ENCODE measurements at regions of chr17 and their contacts with region 1.

Region 1: GRCh38 chr17:55710410-55710809 is 12.3 kb downstream of the TMEM100 start:
- DNase-seq: peak; percentile 51 to 60
- ATAC-seq: peak; percentile 88 to 91
- H3K4me3 ChIP-seq: peak overlapping the region in 1 of 4 donors; percentile 44
- H3K27ac ChIP-seq: peak overlapping the region; percentile 88 to 96 (median 94)
- H3K4me1 ChIP-seq: peaks cover 48 to 55% of the 10 kb centered on the region in 2 donors
- H3K27me3 ChIP-seq: no peaks in the 10 kb centered on the region
- CTCF ChIP-seq: no peak
- POLR2A ChIP-seq: no peak

Region 2: DNA sequence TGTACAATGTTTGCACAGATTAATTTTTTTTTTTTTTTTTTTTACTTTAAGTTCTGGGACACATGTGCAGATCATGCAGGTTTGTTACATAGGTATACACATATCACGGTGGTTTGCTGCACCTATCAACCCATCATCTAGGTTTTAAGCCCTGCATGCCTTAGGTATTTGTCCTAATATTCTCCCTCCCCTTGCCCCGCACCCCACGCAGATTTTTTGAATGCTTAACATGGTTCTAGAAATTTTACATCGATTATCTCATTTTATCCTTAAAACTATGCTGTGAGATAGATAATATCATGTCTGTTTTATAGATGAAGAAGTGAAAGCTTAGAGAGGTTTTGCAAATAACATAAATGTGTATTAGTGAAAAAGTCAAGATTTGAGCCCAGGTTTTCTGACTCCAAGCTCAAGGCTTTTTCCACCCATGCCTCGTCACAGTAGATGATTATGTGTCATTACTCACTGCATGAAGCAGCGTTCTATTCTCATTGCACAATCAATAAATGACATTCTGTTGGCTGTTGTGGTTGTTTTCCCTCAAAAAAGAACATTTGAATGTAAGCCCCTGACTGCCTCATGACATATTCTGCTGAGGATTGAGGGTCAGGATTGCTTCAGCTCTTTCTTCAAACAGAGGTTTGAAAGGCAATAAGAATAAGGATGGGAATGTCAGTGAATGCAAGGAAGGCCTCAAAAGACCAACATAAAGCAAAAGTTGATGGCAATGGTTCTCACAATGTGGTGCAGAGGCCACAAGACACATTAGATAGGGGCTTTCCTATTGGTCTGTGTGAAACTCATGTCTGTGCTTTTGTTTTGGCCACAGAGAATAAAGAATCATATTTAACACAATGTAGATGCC is 283.6 kb before region 1 on chr17:
- in situ Hi-C with region 1: no loop called
- intact Hi-C with region 1: no loop called
- DNase-seq: no peak
- ATAC-seq: no peak
- H3K4me3 ChIP-seq: no peak overlapping the region
- H3K27ac ChIP-seq: no peak overlapping the region
- H3K4me1 ChIP-seq: peaks cover 4 to 5% of the 10 kb centered on the region in 2 donors
- H3K27me3 ChIP-seq: no peaks in the 10 kb centered on the region
- CTCF ChIP-seq: no peak
- POLR2A ChIP-seq: no peak

Region 3: GRCh38 chr17:55625521-55625920 is 84.9 kb before region 1 on chr17:
- in situ Hi-C with region 1: no loop called
- intact Hi-C with region 1: no loop called
- DNase-seq: no peak
- ATAC-seq: no peak
- H3K4me3 ChIP-seq: no peak overlapping the region
- H3K27ac ChIP-seq: no peak overlapping the region
- H3K4me1 ChIP-seq: no peaks in the 10 kb centered on the region
- H3K27me3 ChIP-seq: no peaks in the 10 kb centered on the region
- CTCF ChIP-seq: no peak
- POLR2A ChIP-seq: no peak

Region 4: DNA sequence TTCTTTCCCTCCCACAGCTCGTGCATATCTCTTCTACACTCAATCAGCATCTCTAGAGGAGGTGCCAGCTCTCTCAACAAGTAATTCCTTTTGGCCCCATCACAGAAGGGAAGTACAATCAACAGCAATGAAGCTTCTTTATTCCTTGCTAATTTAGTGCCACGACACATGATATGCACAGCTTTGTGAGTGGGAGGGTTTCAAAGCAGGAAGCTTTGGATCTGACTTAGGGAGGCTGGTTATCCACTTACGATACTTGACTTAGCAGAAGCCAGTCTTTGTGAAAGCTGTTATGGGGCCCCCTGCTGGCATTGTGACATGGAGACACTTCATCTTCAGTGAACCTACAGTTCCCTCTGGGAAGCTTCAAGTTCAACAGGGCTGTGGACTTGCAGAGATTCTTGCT is 68.7 kb before region 1 on chr17:
- in situ Hi-C with region 1: no loop called
- intact Hi-C with region 1: no loop called
- DNase-seq: peak; percentile 13 to 23
- ATAC-seq: no peak
- H3K4me3 ChIP-seq: no peak overlapping the region
- H3K27ac ChIP-seq: no peak overlapping the region
- H3K4me1 ChIP-seq: no peaks in the 10 kb centered on the region
- H3K27me3 ChIP-seq: no peaks in the 10 kb centered on the region
- CTCF ChIP-seq: peak; percentile 17 to 55 (median 43)
- POLR2A ChIP-seq: no peak

Region 5: GRCh38 chr17:55743103-55743679 is 32.8 kb after region 1 on chr17:
- in situ Hi-C with region 1: no loop called
- intact Hi-C with region 1: loop called (anchors 2 kb)
- DNase-seq: no peak
- ATAC-seq: no peak
- H3K4me3 ChIP-seq: no peak overlapping the region
- H3K27ac ChIP-seq: no peak overlapping the region
- H3K4me1 ChIP-seq: peaks cover 9 to 17% of the 10 kb centered on the region in 2 donors
- H3K27me3 ChIP-seq: no peaks in the 10 kb centered on the region
- CTCF ChIP-seq: no peak
- POLR2A ChIP-seq: no peak

Region 6: DNA sequence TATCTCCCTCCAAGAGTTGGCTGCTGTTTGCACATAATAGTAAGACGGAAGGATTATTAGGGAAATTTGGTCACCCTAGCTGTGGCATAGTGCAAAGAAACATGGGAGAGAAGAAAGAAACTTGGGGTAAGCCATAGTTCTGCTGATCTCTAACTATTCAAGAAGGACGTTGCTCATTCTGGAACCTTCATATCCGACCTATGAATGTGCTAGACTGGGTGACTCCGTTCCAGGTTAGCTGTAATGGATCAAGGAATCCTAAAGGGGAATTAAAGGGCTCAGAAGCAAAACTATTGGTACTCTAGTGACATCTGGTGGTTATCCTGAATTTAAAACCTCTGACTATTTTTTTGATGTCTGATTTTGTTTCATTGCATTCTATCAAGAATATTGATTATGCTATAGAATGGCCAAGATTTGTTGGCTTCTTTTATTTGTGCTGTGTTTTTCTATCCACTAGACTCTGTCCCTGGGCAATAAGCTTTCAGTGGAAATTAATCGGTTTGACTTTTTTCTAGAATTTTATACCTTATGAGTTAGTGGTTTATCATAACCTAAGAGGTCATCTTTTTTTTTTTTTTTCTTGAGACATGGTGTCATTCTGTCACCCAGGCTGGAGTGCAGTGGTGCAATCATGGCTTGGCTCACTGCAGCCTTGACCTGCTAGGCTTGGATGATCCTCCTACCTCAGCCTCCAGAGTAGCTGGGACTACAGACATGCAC is 59.9 kb after region 1 on chr17:
- in situ Hi-C with region 1: loop called in 2 of 4 experiments (anchors 5 to 10 kb)
- intact Hi-C with region 1: loop called (anchors 2 kb)
- DNase-seq: no peak
- ATAC-seq: peak; percentile 70 to 83
- H3K4me3 ChIP-seq: no peak overlapping the region
- H3K27ac ChIP-seq: peak overlapping the region; percentile 20 to 48 (median 38)
- H3K4me1 ChIP-seq: peaks cover 10 to 13% of the 10 kb centered on the region in 2 donors
- H3K27me3 ChIP-seq: no peaks in the 10 kb centered on the region
- CTCF ChIP-seq: peak; percentile 69 to 75 (median 72)
- POLR2A ChIP-seq: no peak

Region 7: GRCh38 chr17:55783684-55784245 is 73.4 kb after region 1 on chr17:
- in situ Hi-C with region 1: loop called in 1 of 4 experiments (anchors 10 kb)
- intact Hi-C with region 1: loop called (anchors 2 kb)
- DNase-seq: peak; percentile 88 to 95
- ATAC-seq: peak; percentile 93 to 95
- H3K4me3 ChIP-seq: peak overlapping the region in 2 of 4 donors; percentile 9 to 10
- H3K27ac ChIP-seq: peak overlapping the region; percentile 83 to 93 (median 89)
- H3K4me1 ChIP-seq: peaks cover 23 to 32% of the 10 kb centered on the region in 2 donors
- H3K27me3 ChIP-seq: no peaks in the 10 kb centered on the region
- CTCF ChIP-seq: no peak
- POLR2A ChIP-seq: peak in 1 of 2 donors; percentile 70

Region 8: DNA sequence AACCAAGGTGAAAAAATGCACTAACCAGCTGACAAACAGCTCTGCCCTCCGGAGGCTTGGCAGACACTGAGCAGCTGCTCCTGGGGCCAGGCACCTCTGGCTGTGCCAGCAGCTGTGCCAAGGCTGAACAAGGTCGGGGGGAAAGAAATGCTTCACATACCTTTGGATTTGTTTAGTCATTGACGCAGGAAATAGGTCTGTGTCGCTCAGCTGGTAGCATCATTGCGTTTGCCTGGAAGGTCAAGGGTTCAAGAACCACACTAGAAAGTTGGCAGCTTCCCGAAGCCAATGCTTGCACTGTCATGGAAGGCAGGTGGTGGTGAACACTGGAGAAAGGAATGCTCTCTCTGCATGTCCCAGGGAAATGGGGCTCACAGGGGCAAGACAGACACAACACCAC is 104.0 kb after region 1 on chr17:
- in situ Hi-C with region 1: no loop called
- intact Hi-C with region 1: no loop called
- DNase-seq: no peak
- ATAC-seq: no peak
- H3K4me3 ChIP-seq: no peak overlapping the region
- H3K27ac ChIP-seq: no peak overlapping the region
- H3K4me1 ChIP-seq: peaks cover 0 to 3% of the 10 kb centered on the region in 2 donors
- H3K27me3 ChIP-seq: no peaks in the 10 kb centered on the region
- CTCF ChIP-seq: no peak
- POLR2A ChIP-seq: no peak